HAP-1 (cell line): ENCODE measurements at regions of chr15 and their contacts with region 1.

Region 1: GRCh38 chr15:25508369-25509002 is 69.7 kb upstream of the UBE3A start:
- DNase-seq: peak; percentile 56 to 82
- H3K4me3 ChIP-seq: no peak overlapping the region
- H3K4me1 ChIP-seq: peaks cover 29% of the 10 kb centered on the region
- H3K27me3 ChIP-seq: no peaks in the 10 kb centered on the region

Region 2: GRCh38 chr15:25397100-25397499 is 111.4 kb before region 1 on chr15:
- in situ Hi-C with region 1: no loop called
- DNase-seq: no peak
- H3K4me3 ChIP-seq: no peak overlapping the region
- H3K4me1 ChIP-seq: peaks cover 6% of the 10 kb centered on the region; the same call in 1 of the 2 replicates
- H3K27me3 ChIP-seq: no peaks in the 10 kb centered on the region

Region 3: GRCh38 chr15:25684521-25685431 is 176.3 kb after region 1 on chr15:
- in situ Hi-C with region 1: loop called (anchors 5 kb)
- DNase-seq: peak; percentile 89 to 100
- H3K4me3 ChIP-seq: no peak overlapping the region
- H3K4me1 ChIP-seq: peaks cover 18% of the 10 kb centered on the region
- H3K27me3 ChIP-seq: no peaks in the 10 kb centered on the region

Region 4: GRCh38 chr15:25933456-25934158 is 425.1 kb after region 1 on chr15:
- in situ Hi-C with region 1: loop called (anchors 10 kb)
- DNase-seq: peak; percentile 83 to 85
- H3K4me3 ChIP-seq: no peak overlapping the region
- H3K4me1 ChIP-seq: peaks cover 9% of the 10 kb centered on the region
- H3K27me3 ChIP-seq: no peaks in the 10 kb centered on the region

Region 5: DNA sequence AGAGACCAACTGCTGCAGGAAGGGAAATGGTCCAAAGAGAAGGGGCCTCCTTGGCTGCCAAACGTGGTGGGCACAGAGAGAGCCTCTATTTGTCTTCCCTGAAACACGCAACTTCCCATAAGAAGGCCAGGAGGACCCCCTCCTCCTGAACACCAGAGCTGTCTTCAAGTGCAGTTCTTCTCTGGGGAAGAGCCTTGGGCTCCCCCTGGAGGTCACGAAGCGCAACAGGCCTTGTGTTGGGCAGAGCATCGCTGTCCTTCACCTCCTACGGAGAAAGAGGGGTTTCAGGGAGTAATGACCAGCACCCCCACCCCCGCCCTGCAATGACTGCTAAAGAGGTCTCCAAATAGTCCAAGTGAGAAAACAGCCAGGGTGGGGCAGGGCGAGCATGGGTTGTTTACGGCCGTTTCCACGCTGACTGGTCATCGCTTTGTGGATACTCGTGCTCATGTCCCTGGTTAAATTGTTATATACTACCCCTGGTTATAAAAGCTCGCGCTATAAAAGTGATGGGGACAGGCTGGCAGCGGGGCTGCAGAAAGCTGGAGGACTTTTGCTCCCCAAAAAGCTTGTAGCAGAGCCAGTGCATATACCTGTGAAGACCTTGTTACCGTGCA is 752.1 kb after region 1 on chr15:
- in situ Hi-C with region 1: loop called (anchors 25 kb)
- DNase-seq: peak; percentile 63 to 64
- H3K4me3 ChIP-seq: no peak overlapping the region
- H3K4me1 ChIP-seq: no peaks in the 10 kb centered on the region
- H3K27me3 ChIP-seq: no peaks in the 10 kb centered on the region

Region 6: DNA sequence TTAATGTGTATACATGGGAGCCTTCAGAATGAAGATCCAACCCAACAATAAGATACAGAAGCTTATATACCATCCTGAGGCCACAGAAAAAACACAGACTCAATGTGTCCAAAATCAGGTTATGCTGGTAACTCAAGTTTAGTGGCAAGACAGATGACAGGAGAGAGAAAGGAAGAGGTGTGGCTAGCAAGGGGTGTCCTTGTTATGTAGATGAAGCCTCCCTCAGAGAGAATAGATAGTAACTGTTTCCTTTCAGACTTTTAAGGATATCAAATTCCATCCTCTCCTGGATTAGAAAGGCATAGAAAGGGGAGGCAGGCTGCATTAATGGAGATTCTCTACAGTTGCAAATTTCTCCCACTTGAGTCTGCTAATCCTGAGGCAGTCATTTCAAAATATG is 817.0 kb after region 1 on chr15:
- in situ Hi-C with region 1: no loop called
- DNase-seq: peak; percentile 56 to 97
- H3K4me3 ChIP-seq: no peak overlapping the region
- H3K4me1 ChIP-seq: peaks cover 11% of the 10 kb centered on the region
- H3K27me3 ChIP-seq: no peaks in the 10 kb centered on the region